B cell (primary cell): ENCODE measurements at regions of chr1 and their contacts with region 1.

Region 1: GRCh38 chr1:32351399-32352238 is 10.7 kb downstream of the FAM229A start:
- DNase-seq: peak; percentile 95
- ATAC-seq: peak; percentile 96
- H3K4me3 ChIP-seq: peak overlapping the region; percentile 40 to 75 (median 63)
- H3K4me3 Mint-ChIP-seq: peak overlapping the region; percentile 88
- H3K27ac ChIP-seq: peak overlapping the region; percentile 54 to 91
- H3K27ac Mint-ChIP-seq: peak overlapping the region; percentile 88
- H3K4me1 ChIP-seq: peaks cover 14 to 27% of the 10 kb centered on the region in 2 donors
- H3K4me1 Mint-ChIP-seq: peaks cover 22% of the 10 kb centered on the region
- H3K27me3 ChIP-seq: no peaks in the 10 kb centered on the region
- H3K27me3 Mint-ChIP-seq: no peaks in the 10 kb centered on the region
- CTCF ChIP-seq: no peak

Region 2: DNA sequence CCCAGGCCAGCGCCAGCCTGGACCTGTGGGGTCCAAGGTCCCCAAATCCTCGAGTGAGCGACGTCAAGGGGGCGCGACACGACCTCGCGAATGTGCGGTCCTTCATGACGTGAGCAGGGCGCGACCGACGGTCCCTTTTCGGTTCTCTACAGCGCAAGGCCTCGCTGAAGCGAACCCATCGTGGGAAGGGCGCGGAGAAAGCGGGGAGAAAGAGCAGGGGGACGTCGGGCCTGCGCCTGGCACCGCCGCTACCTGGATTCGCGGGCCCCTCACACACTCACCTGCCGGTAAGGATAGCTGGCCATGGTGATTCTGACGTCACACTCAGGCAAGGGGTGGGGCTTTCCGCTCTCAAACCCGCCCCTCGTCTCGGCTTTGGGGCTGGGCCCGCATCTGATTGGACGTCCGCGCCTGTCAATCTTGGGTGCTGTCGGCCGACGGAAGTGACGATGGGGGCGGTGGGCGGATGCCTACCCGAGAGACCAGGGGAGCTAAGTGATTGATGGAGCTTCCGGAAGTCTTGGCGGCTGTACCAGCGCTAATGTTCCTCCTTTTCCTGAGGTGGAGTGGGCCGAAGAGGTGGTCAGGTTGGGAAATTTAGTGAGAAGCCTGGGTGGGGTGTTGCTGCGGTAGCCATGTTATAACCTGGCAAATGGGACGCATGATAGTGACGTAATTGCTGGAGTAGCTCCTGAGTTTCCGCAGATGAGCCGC is 706.9 kb before region 1 on chr1 and contains the start of gene PEF1:
- CTCF ChIA-PET with region 1: no interaction called
- POLR2A ChIA-PET with region 1: no interaction called
- intact Hi-C with region 1: loop called (anchors 10 kb)
- DNase-seq: peak; percentile 100
- ATAC-seq: peak; percentile 93
- H3K4me3 ChIP-seq: peak within 1 kb of the TSS; percentile 70 to 98 (median 95)
- H3K4me3 Mint-ChIP-seq: peak within 1 kb of the TSS; percentile 98
- H3K27ac ChIP-seq: peak within 1 kb of the TSS; percentile 98 to 99
- H3K27ac Mint-ChIP-seq: peak within 1 kb of the TSS; percentile 99
- H3K4me1 ChIP-seq: peaks cover 17 to 19% of the 10 kb centered on the region in 2 donors
- H3K4me1 Mint-ChIP-seq: peaks cover 31% of the 10 kb centered on the region
- H3K27me3 ChIP-seq: no peaks in the 10 kb centered on the region
- H3K27me3 Mint-ChIP-seq: no peaks in the 10 kb centered on the region
- CTCF ChIP-seq: no peak
- total RNA-seq, gene PEF1: 36.7 and 46.9 TPM in 2 replicates

Region 3: DNA sequence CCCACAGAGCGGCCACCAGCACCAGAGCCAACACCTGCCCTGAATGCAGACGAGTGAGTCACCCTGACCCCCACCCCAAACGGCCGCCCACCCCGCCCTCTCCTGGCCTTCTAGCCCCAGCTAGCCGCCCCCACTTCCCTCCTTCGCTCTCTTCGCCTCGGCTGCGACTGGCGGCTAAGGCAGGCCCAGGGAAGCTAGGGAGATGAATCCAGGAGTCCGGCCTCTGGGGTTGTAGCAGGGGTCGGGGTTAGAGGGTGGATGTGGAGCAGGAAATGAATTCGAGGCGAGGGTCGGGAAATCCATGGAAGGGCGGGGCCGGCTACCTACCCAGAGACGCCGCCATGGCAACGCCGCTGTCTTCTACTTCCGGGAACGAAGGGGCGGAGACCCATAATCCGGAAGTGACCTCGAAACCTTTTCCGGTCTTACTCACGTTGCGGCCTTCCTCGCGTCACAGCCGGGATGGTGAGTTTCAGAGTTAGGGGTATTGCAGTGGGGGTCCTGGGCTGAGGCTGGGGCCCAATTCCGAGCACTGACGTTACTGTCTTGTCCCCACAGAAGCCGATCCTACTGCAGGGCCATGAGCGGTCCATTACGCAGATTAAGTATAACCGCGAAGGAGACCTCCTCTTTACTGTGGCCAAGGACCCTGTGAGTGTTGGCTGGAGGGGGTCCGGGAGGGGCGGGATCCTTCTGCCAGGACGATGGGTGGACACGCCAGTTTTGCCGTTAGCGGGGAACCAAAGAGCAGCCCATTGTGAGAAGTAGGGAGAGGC is 129.5 kb before region 1 on chr1 and contains the starts of genes EIF3I and TMEM234:
- CTCF ChIA-PET with region 1: interaction called, 3 read pairs
- POLR2A ChIA-PET with region 1: no interaction called
- intact Hi-C with region 1: loop called (anchors 1 kb)
- DNase-seq: peak; percentile 94
- ATAC-seq: peak; percentile 86
- H3K4me3 ChIP-seq: peak within 1 kb of the TSS; percentile 61 to 99 (median 93)
- H3K4me3 Mint-ChIP-seq: peak within 1 kb of the TSS; percentile 97
- H3K27ac ChIP-seq: peak within 1 kb of the TSS; percentile 72 to 94
- H3K27ac Mint-ChIP-seq: peak within 1 kb of the TSS; percentile 98
- H3K4me1 ChIP-seq: peaks cover 28 to 30% of the 10 kb centered on the region in 2 donors
- H3K4me1 Mint-ChIP-seq: peaks cover 43% of the 10 kb centered on the region
- H3K27me3 ChIP-seq: no peaks in the 10 kb centered on the region
- H3K27me3 Mint-ChIP-seq: no peaks in the 10 kb centered on the region
- CTCF ChIP-seq: no peak
- total RNA-seq, gene EIF3I: 87.0 and 91.0 TPM in 2 replicates
- total RNA-seq, gene TMEM234: 50.4 and 60.8 TPM in 2 replicates

Region 4: GRCh38 chr1:32321712-32322291 is 29.8 kb before region 1 on chr1:
- CTCF ChIA-PET with region 1: no interaction called
- POLR2A ChIA-PET with region 1: interaction called, 3 read pairs
- intact Hi-C with region 1: loop called (anchors 2 kb)
- DNase-seq: no peak
- ATAC-seq: peak; percentile 35
- H3K4me3 ChIP-seq: peak overlapping the region in 3 of 5 experiments; percentile 5 to 34 (median 12)
- H3K4me3 Mint-ChIP-seq: peak overlapping the region; percentile 80
- H3K27ac ChIP-seq: peak overlapping the region; percentile 59 to 63
- H3K27ac Mint-ChIP-seq: peak overlapping the region; percentile 89
- H3K4me1 ChIP-seq: peaks cover 70 to 78% of the 10 kb centered on the region in 2 donors
- H3K4me1 Mint-ChIP-seq: peaks cover 57% of the 10 kb centered on the region
- H3K27me3 ChIP-seq: no peaks in the 10 kb centered on the region
- H3K27me3 Mint-ChIP-seq: no peaks in the 10 kb centered on the region
- CTCF ChIP-seq: no peak

Region 5: DNA sequence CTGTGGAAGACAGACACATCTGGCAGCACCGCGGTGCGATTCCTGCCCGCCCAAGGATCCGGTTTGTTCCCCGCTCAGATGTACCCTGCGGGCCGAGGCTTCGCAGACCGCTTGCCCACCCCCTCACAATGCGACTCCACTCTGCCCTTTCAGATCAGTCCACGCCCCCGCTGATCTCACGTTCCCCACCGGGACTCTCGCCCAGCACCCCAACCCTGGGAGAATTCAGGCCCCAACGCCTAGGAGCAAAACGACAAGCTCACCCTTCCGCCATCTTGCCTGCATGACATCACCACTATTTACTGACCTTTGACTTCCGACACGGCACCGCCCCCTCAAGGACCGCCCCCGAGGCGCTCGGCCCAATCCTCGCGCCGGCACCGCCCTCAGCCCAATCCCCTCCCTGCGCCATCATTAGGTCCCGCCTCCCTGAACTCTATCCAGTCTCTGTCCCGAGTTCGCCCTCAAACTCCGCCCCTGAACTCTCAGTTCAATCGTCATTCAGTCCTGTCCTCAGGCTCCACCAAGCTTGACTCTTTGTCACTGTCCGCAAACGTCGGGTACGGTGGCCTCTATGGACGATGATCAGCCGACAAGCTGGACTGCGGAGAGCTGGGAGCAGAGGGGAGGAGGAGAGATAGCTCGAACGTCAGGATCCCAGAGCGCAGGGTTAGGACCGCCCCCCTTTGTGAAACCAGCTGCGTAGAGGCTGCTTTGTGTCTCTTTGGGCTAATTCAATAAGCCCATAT is 42.7 kb after region 1 on chr1 and contains the start of gene BSDC1:
- CTCF ChIA-PET with region 1: interaction called, 3 read pairs
- POLR2A ChIA-PET with region 1: no interaction called
- intact Hi-C with region 1: loop called (anchors 1 kb)
- DNase-seq: peak; percentile 99
- ATAC-seq: peak; percentile 99
- H3K4me3 ChIP-seq: peak within 1 kb of the TSS; percentile 66 to 94 (median 84)
- H3K4me3 Mint-ChIP-seq: peak within 1 kb of the TSS; percentile 99
- H3K27ac ChIP-seq: peak within 1 kb of the TSS; percentile 91
- H3K27ac Mint-ChIP-seq: peak within 1 kb of the TSS; percentile 99
- H3K4me1 ChIP-seq: peaks cover 14 to 27% of the 10 kb centered on the region in 2 donors
- H3K4me1 Mint-ChIP-seq: peaks cover 31% of the 10 kb centered on the region
- H3K27me3 ChIP-seq: no peaks in the 10 kb centered on the region
- H3K27me3 Mint-ChIP-seq: peaks cover 3% of the 10 kb centered on the region
- CTCF ChIP-seq: no peak
- total RNA-seq, gene BSDC1: 117 and 124 TPM in 2 replicates